A673 (cell line): ENCODE measurements at regions of chr7 and their contacts with region 1.

Region 1: GRCh38 chr7:64485623-64486022 is 77.2 kb downstream of the ZNF680 start:
- DNase-seq: no peak
- H3K4me3 ChIP-seq: no peak overlapping the region
- H3K27ac ChIP-seq: no peak overlapping the region
- H3K4me1 ChIP-seq: no peaks in the 10 kb centered on the region
- H3K27me3 ChIP-seq: no peaks in the 10 kb centered on the region
- CTCF ChIP-seq: no peak

Region 2: GRCh38 chr7:64241162-64241561 is 244.5 kb before region 1 on chr7:
- CTCF ChIA-PET with region 1: no interaction called
- POLR2A ChIA-PET with region 1: no interaction called
- intact Hi-C with region 1: no loop called
- DNase-seq: no peak
- H3K4me3 ChIP-seq: no peak overlapping the region
- H3K27ac ChIP-seq: no peak overlapping the region
- H3K4me1 ChIP-seq: no peaks in the 10 kb centered on the region
- H3K27me3 ChIP-seq: no peaks in the 10 kb centered on the region
- CTCF ChIP-seq: no peak

Region 3: GRCh38 chr7:64504581-64505120 is 19.0 kb after region 1 on chr7:
- CTCF ChIA-PET with region 1: no interaction called
- POLR2A ChIA-PET with region 1: no interaction called
- intact Hi-C with region 1: loop called (anchors 2 kb)
- DNase-seq: peak; percentile 10
- H3K4me3 ChIP-seq: no peak overlapping the region
- H3K27ac ChIP-seq: no peak overlapping the region
- H3K4me1 ChIP-seq: no peaks in the 10 kb centered on the region
- H3K27me3 ChIP-seq: no peaks in the 10 kb centered on the region
- CTCF ChIP-seq: no peak

Region 4: DNA sequence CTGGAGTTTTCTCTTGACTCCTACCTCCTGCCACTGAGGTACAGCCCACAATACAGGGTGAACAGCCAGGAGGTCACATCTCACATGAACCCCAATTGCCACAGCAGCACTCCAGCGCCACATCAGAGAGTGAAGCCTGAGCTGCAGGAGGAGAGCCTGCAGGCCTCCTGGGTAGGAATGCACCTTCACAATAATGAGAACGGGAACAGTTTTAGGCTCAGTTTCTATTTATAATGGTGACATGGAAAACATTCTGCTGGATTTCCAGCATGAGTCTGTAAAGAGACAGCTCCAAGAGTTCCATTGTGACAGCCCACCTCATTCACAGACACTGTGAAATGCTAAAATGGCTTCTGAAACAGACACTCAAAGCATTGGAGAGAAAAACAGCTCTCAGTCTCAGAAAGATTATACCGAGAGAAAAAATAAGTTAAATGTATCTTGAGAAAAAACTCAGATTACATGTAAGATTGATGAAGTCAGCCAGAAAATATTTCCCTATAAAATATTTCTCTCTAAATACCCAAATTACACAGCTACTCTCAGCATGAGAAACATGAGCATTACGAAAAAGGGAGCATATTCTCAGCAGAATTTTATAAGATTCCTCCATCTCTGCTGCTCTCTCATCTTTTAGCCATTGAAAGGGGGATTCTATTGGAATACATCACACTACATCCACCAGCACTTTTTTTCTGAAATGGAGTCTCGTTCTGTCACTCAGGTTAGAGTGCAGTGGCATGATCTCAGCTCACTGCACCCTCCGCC is 65.9 kb after region 1 on chr7:
- CTCF ChIA-PET with region 1: no interaction called
- POLR2A ChIA-PET with region 1: no interaction called
- intact Hi-C with region 1: no loop called
- DNase-seq: no peak
- H3K4me3 ChIP-seq: no peak overlapping the region
- H3K27ac ChIP-seq: no peak overlapping the region
- H3K4me1 ChIP-seq: no peaks in the 10 kb centered on the region
- H3K27me3 ChIP-seq: no peaks in the 10 kb centered on the region
- CTCF ChIP-seq: no peak